ENCODE measurements at regions of chr19 and their contacts with region 1.

Region 1: GRCh38 chr19:10517760-10518443 is 655 bp upstream of the S1PR5 start:
- DNase-seq: peak; percentile 65
- ATAC-seq: peak; percentile 38
- H3K4me3 Mint-ChIP-seq: peak overlapping the region; percentile 80
- H3K27ac Mint-ChIP-seq: no peak overlapping the region
- H3K4me1 Mint-ChIP-seq: peaks cover 35% of the 10 kb centered on the region
- H3K27me3 Mint-ChIP-seq: peaks cover 69% of the 10 kb centered on the region
- CTCF ChIP-seq: no peak

Region 2: DNA sequence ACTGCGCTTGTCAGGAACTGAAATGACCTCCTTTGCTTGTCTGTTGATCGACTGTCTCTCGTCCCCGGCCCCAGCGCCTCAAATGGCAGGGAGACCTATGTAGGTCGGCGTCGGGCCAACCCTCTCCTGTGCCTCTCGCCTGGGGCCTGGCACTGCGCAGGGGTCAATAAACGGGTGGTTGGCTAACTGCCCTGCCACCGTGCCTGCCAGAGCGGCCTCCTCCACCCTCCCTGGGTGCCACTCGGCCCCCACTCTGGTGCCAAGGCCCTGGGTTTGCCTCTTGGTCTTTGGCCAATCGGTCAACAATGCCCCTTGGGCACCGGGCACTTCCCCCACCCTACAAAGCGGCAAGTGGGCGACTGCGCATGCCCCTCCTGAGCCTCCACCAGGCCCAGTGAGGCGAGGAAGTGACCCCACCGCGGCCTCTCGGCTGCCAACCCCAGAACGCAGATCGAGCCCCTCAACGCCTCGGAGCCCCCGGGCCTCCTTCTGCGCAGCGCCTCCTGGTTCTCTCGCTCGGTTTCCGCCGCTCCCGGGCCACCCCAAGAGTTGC is 15.9 kb before region 1 on chr19:
- CTCF ChIA-PET with region 1: interaction called, 17 read pairs
- POLR2A ChIA-PET with region 1: no interaction called
- DNase-seq: peak; percentile 45
- ATAC-seq: peak; percentile 3
- H3K4me3 Mint-ChIP-seq: peak overlapping the region; percentile 83
- H3K27ac Mint-ChIP-seq: peak overlapping the region; percentile 93
- H3K4me1 Mint-ChIP-seq: peaks cover 26% of the 10 kb centered on the region
- H3K27me3 Mint-ChIP-seq: 0 out of 2 replicates have a peak, but pooled peaks cover 4% of the 10 kb centered on the region
- CTCF ChIP-seq: no peak

Region 3: DNA sequence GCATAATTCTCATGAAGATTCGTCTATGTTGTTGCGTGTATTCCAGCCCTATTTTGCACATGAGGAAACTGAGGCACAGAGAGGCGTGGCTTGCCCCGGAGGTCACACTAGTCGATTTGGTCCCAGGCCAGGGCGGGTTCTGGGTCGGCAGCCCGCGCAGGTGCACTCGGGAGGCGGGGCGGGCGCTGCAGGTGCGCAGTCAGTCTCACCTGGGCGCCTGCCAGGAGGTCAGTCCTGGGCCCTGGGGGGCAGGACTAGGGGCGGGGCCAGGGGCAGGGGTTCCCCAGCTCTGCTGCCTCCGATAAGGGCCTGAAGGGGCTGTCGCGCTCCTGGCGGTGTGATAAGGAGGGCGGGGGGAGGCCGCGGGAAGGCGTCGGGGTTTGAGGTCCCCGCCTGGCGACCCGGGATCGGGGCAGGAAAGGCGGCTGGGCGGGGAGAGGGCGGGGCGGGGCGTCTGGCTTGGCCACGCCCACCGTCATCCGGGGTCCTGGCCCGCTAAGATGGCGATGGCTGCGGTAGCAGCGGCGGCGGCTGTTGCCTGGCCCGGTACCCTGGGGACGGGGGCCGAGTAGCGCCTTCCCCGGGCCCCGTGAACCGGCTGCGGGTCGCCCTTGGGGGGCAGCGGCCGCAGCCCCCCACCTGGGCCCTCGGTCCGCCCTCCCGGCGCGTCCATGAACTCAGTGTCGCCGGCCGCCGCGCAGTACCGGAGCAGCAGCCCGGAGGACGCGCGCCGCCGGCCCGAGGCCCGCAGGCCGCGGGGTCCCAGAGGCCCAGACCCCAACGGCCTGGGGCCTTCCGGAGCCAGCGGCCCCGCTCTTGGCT is 25.7 kb after region 1 on chr19 and contains the start of gene ATG4D:
- CTCF ChIA-PET with region 1: interaction called, 15 read pairs
- POLR2A ChIA-PET with region 1: no interaction called
- DNase-seq: peak; percentile 92
- ATAC-seq: peak; percentile 87
- H3K4me3 Mint-ChIP-seq: peak within 1 kb of the TSS; percentile 83
- H3K27ac Mint-ChIP-seq: peak within 1 kb of the TSS; percentile 93
- H3K4me1 Mint-ChIP-seq: peaks cover 4% of the 10 kb centered on the region; the same call in 1 of the 2 replicates
- H3K27me3 Mint-ChIP-seq: peaks cover 6% of the 10 kb centered on the region
- CTCF ChIP-seq: no peak
- total RNA-seq, gene ATG4D: 50.3 to 59.4 TPM (median 53.8 TPM) in 3 replicates

Region 4: GRCh38 chr19:10551698-10552301 is 33.9 kb after region 1 on chr19:
- CTCF ChIA-PET with region 1: interaction called, 12 read pairs
- POLR2A ChIA-PET with region 1: no interaction called
- DNase-seq: peak; percentile 41
- ATAC-seq: peak; percentile 38
- H3K4me3 Mint-ChIP-seq: no peak overlapping the region
- H3K27ac Mint-ChIP-seq: no peak overlapping the region
- H3K4me1 Mint-ChIP-seq: no peaks in the 10 kb centered on the region
- H3K27me3 Mint-ChIP-seq: no peaks in the 10 kb centered on the region
- CTCF ChIP-seq: no peak

Region 5: GRCh38 chr19:10677751-10678150 is 159.8 kb after region 1 on chr19:
- CTCF ChIA-PET with region 1: no interaction called
- POLR2A ChIA-PET with region 1: no interaction called
- DNase-seq: no peak
- ATAC-seq: no peak
- H3K4me3 Mint-ChIP-seq: no peak overlapping the region
- H3K27ac Mint-ChIP-seq: no peak overlapping the region
- H3K4me1 Mint-ChIP-seq: no peaks in the 10 kb centered on the region
- H3K27me3 Mint-ChIP-seq: no peaks in the 10 kb centered on the region
- CTCF ChIP-seq: no peak